Mucosa of descending colon (tissue), 3 donors: ENCODE measurements at regions of chr22 and their contacts with region 1.

Region 1: GRCh38 chr22:24805790-24806662 is at the start of gene SGSM1:
- DNase-seq: peak; percentile 86 to 90 (median 86)
- ATAC-seq: peak; percentile 97
- H3K4me3 ChIP-seq: peak within 1 kb of the TSS; percentile 14
- H3K4me1 ChIP-seq: no peaks in the 10 kb centered on the region
- CTCF ChIP-seq: no peak
- total RNA-seq, gene SGSM1: 2.0 to 6.5 (median 3.0) TPM

Region 2: GRCh38 chr22:24727218-24727851 is 78.7 kb before region 1 on chr22:
- intact Hi-C with region 1: no loop called
- DNase-seq: peak in 1 of 3 donors; percentile 44
- ATAC-seq: peak; percentile 88
- H3K4me3 ChIP-seq: no peak overlapping the region
- H3K4me1 ChIP-seq: no peaks in the 10 kb centered on the region
- CTCF ChIP-seq: no peak

Region 3: GRCh38 chr22:25404928-25405816 is 599.1 kb after region 1 on chr22:
- intact Hi-C with region 1: loop called in 1 of 2 experiments (anchors 5 kb)
- DNase-seq: peak; percentile 87 to 92 (median 90)
- ATAC-seq: peak; percentile 82
- H3K4me3 ChIP-seq: peak overlapping the region; percentile 84
- H3K4me1 ChIP-seq: peaks cover 43% of the 10 kb centered on the region
- CTCF ChIP-seq: no peak